Cardiac septum (tissue), 1 donor: ENCODE measurements at regions of chr17 and their contacts with region 1.

Region 1: GRCh38 chr17:69574257-69575197 is 160.0 kb downstream of the MAP2K6 start:
- DNase-seq: no peak

Region 2: GRCh38 chr17:69539781-69540319 is 34.7 kb before region 1 on chr17:
- intact Hi-C with region 1: no loop called
- DNase-seq: no peak

Region 3: DNA sequence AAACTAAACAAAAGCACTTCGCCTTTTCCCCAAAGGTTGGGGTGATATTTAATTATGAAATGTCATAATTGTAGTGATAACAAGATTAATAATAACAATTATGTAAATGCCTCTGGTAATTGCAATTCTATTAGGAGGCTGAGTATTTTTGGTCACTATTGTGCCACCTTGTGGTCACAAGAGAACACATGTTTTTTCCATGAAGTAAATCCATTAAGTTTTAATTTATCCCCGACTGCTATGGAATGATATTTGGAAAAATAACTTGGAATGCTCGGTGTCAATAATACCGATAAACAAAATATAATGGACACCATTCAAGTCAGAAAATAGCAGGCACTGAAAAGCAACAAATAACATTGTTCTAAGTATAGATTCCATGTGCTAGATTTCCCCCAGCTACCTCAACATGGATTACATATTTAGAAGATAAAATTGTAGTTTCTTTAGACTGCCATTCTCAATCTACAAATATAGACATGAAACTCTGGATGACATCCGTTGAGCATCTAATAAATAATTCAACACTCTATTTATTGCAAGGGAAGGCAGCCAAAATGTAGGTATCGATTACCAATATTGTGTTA is 569.8 kb after region 1 on chr17:
- intact Hi-C with region 1: loop called (anchors 2 kb)
- DNase-seq: no peak